Mammary epithelial cell (primary cell): ENCODE measurements at regions of chr13 and their contacts with region 1.

Region 1: DNA sequence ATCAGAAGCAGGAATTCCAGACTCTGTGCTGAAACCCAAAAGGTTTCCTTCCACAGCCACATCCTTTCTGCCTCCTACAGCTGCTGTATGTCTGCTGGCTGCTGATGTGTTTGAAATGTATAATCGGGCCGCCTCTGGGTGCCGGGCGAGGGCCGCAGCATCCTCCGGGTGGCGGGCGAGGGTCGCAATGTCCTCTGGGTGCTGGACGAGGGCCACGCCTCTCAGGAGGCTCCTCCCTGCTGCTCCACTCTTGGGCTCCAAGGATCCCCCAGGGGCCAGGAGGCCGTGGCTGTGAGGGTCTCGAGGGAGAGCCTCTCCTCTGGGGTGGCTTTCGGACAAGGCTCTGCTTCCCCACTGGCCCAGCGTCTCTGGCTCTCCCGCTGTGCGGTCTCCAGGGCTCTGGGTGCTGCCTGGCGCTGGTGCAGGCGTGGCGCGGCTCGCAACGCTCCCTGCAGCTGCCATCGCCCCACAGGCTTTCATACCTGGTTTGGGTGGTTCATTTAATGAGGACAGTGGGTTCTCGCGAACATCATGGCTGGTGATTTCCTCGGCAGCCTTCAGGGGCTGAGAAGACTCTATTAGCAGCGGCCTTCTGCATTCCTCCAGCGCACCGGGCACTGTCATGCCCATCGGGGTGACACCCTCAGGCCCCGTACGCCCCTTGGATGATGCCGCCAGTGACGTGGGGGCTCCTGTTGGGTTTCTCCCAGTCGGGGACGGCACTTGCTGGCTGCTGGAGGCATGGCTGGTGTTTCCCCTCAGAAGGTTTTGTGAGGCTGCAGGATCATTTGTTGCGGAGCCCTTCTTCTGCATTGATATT is 41.8 kb upstream of the GRTP1 start:
- DNase-seq: no peak
- H3K4me3 ChIP-seq: no peak overlapping the region
- H3K27ac ChIP-seq: no peak overlapping the region
- H3K4me1 ChIP-seq: no peaks in the 10 kb centered on the region
- H3K27me3 ChIP-seq: peaks cover 4% of the 10 kb centered on the region
- CTCF ChIP-seq: no peak

Region 2: DNA sequence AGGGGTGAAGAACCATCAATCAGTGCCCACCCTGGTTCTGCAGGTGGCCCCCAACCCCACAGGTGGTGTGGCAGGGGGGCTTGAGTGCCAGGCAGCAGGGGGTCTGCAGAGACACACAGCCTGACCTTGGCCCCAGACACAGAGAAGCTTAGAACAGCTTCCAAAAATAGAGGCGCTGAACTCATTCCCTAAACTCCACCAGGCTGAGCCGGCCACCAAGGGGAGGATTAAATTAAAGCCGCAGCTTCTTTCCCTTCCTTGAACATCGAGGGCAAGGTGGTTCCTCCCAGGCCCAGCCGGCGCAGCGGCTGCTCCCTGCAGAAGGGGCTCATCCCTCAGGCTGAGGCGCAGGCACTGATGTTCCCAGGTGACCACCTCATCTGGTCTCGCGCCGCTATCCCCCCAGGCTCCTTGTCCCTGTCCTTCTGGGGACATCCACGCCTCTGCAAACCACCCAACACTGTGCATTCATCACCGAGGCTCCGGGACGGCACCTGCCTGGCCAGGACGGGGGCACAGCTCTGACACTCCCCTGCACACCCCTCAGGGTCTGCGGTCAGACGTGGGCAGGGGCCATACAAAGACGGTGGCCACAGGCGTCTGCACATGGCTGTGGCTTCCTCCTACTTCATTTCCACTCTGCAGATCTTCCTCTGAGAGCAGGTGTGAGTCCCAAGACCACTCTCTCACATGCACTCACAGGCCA is 77.8 kb before region 1 on chr13:
- CTCF ChIA-PET with region 1: no interaction called
- dilution Hi-C with region 1: loop called (anchors 5 kb)
- in situ Hi-C with region 1: no loop called
- intact Hi-C with region 1: no loop called
- DNase-seq: no peak
- H3K4me3 ChIP-seq: no peak overlapping the region
- H3K27ac ChIP-seq: no peak overlapping the region
- H3K4me1 ChIP-seq: no peaks in the 10 kb centered on the region
- H3K27me3 ChIP-seq: no peaks in the 10 kb centered on the region
- CTCF ChIP-seq: no peak

Region 3: DNA sequence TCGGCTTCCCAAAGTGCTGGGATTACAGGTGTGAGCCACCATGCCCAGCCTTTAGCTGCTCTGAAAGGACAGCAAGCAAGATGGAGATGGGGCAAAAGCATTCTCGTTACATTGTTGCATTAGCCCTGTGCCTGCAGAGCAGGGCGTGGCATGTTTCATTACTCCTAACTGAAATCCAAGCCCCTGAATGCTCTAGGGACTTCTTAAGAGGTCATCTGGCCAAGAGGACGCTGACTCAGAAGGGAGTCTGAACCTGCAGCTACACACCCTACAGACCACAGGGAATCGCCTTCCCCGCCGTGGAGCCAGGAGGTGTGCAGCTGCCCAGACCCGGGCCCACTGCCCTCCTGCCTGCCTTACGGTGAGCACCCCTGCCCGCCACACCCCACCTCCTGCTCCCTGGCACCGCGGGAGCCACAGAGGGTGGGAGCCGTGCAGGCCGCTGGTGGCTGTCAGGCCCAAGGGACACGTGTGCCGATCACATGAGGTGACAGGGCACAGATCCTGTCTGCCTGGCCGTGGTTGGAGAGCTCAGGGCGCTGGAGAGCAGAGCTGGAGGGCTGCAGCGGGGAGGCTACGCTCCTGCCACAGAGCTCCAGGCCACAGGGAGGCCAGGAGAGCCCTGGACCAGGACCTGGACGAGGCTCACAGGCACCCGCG is 20.4 kb after region 1 on chr13:
- CTCF ChIA-PET with region 1: no interaction called
- dilution Hi-C with region 1: no loop called
- in situ Hi-C with region 1: no loop called
- intact Hi-C with region 1: no loop called
- DNase-seq: no peak
- H3K4me3 ChIP-seq: no peak overlapping the region
- H3K27ac ChIP-seq: no peak overlapping the region
- H3K4me1 ChIP-seq: no peaks in the 10 kb centered on the region
- H3K27me3 ChIP-seq: no peaks in the 10 kb centered on the region
- CTCF ChIP-seq: no peak

Region 4: DNA sequence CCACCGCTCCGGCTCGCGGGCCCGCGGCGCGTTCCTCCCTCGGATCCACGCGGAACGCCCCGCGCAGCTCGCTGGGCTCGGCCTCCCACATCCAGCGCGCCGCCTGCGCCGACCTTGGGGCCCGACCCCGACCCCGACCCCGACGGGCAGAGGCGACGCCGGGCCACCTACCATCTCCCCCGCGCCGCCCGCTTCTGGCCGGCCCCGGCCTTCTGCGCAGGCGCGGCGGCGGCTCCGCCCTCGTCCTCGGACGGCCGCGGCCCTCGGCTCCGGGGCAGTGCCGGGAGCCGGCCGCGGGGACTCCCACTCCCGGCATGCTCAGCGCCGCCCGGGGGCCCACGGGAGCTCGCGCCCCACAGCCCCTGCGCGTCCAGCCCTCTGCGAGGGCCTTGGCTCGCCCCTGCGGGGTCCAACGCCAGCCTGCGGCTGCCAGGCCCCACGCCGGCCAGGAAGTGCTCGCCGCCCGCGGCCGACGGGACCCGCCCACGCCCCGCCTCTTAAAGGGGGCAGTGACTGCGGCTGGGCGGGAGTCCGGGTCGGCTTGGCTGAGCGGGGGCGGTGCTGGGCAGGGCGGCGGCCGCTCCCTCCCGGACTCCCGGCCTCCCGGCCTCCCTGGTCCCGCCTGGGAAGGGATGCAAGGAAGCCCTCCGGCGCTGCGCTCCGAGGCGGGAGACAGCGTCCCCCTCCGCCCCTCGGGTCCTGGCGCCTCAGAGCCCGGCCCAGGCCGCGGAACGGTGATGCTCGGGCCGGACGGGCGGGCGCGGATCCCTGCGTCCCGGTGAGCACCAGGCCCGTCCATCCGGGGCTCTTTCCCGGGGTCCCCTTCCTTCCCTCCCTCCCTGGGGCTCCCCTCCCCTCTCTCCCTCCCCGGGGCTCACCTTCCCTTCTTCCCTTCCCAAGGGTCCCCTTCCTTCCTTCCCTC is 85.1 kb after region 1 on chr13 and contains the start of gene DCUN1D2:
- CTCF ChIA-PET with region 1: no interaction called
- dilution Hi-C with region 1: loop called (anchors 5 kb)
- in situ Hi-C with region 1: no loop called
- intact Hi-C with region 1: no loop called
- DNase-seq: peak; percentile 96
- H3K4me3 ChIP-seq: peak within 1 kb of the TSS; percentile 78 to 87 (median 79)
- H3K27ac ChIP-seq: peak within 1 kb of the TSS; percentile 69
- H3K4me1 ChIP-seq: peaks cover 35% of the 10 kb centered on the region
- H3K27me3 ChIP-seq: no peaks in the 10 kb centered on the region
- CTCF ChIP-seq: no peak
- total RNA-seq, gene DCUN1D2: 11.3 to 21.6 TPM